Calu3 (cell line): ENCODE measurements at regions of chr14 and their contacts with region 1.

Region 1: DNA sequence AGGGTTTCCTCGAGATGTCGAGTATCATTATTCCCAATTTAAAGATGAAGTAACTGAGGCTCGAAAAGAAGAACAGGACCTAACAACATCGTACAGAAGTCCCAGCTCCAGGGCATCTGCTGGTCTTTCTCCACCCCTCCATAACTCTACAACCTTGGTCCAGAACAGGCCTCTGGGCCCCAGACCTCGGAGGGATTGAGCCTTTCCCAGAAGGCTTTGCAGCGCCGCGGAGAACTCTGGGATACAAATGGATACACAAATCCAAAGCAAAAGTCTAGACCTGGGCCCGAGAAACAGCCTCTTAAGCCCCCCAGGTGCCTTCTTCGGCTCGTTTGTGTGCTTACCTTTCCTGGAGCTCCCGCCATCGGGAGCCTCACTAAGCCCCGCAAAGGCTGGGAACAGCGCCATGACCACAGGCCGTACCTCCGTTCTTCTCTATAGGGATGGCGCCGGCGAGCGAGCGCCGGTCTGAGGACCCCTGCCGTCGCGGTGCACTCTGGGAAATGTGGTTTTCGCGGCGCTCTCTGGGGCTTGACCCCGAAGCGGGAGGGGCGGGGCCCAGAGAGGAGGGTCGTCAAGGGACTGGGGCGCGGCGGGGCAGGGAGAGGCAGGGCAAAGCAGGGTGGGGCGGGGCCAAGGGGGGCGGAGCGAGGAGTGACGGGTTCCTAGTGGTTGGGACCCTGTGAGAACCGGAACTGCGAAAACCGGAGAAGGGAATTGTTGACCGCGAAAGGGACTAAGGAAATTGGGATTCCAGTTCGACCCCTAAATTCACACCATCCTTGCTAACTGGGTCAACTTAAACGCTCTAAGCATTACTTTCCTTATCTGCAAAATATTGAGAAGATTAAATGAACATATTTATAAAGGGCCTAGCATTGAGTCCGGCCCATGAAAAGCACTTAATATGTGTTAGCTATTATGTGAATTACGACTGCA is at the start of gene NRDE2:
- DNase-seq: peak; percentile 99
- H3K4me3 Mint-ChIP-seq: peak within 1 kb of the TSS; percentile 80
- H3K27ac Mint-ChIP-seq: peak within 1 kb of the TSS; percentile 83
- H3K4me1 Mint-ChIP-seq: peaks cover 22% of the 10 kb centered on the region
- H3K27me3 Mint-ChIP-seq: no peaks in the 10 kb centered on the region
- CTCF ChIP-seq: no peak
- total RNA-seq, gene NRDE2: 18.3 and 19.2 TPM in 2 replicates

Region 2: DNA sequence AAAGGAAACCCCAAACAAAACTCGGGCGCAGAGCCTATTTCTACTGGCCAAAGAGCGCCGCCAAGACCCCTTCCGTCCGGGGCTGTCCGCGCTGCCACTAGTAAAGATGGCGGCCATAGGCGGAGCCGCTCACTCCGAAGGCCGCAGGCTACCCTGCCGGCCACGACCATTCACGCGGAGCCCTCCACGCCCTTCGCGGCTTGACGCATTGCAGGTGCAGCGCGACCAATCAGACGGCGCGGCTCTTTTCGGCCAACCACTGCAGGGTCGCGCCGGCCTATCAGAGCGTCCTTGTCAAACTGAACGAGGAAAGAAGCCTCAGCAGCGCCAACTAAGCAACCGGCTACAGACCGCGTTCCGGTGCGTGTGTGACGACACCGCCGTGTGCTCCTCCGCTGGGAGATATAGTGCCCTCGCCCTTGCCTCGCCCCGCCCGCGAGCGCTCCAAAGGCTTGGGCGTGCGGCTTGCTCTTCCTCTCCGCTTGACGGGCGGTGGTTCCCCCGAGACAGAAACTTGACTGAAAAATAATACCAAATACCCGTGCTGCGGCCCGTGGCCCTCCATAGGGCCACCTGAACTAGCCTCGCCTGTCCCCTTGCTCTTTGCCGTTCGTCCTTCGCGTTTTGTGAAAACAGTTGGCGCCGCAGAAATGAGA is 51.4 kb after region 1 on chr14:
- CTCF ChIA-PET with region 1: interaction called, 3 read pairs
- intact Hi-C with region 1: loop called (anchors 5 kb)
- DNase-seq: peak; percentile 98
- H3K4me3 Mint-ChIP-seq: no peak overlapping the region
- H3K27ac Mint-ChIP-seq: no peak overlapping the region
- H3K4me1 Mint-ChIP-seq: no peaks in the 10 kb centered on the region
- H3K27me3 Mint-ChIP-seq: no peaks in the 10 kb centered on the region
- CTCF ChIP-seq: no peak